Right ventricle myocardium inferior (tissue), 1 donor: ENCODE measurements at regions of chr1 and their contacts with region 1.

Region 1: GRCh38 chr1:159854693-159855192 is 7.7 kb downstream of the VSIG8 start:
- DNase-seq: peak; percentile 94
- ATAC-seq: peak; percentile 98

Region 2: GRCh38 chr1:159780583-159781582 is 73.9 kb before region 1 on chr1 and contains the start of gene DUSP23:
- intact Hi-C with region 1: loop called (anchors 2 kb)
- DNase-seq: peak; percentile 99
- ATAC-seq: peak; percentile 99
- total RNA-seq, gene DUSP23: 21.3 TPM

Region 3: DNA sequence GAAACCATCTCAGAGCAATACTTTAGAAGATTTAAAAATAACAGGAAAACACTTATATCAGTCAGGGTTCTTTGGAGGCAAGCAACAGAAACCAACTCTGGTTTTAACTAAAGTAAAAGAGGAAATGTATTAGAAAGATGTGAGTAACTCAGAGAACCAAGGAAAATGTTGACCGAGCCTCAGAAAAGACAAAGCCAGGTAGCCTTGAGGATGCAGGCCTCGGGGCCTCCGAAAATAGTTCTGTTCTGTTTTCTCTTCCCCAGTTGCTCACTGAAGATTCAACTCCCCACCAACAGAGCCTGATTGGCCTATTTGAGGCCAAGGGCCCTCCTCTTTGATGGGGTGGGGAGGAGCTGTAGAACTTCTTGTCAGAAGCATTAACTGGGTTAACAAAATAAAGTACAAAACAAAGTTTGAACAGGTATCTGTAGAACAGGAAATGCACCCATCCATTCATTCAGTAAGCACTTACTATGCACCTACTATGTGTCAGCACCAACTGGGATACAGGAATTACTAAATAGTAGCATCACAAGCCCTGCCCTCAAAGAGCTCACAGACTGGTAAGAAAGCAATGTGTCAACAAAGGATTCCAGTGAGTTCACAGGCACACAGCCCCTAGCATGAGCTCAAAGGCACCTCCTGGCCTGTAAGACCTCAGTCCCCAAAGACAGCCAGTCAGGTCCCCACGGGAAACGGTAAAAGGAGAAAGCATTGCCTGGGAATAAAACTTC is 15.5 kb before region 1 on chr1:
- intact Hi-C with region 1: no loop called
- DNase-seq: no peak
- ATAC-seq: no peak

Region 4: GRCh38 chr1:159924981-159925712 is 70.4 kb after region 1 on chr1 and contains the start of gene TAGLN2:
- intact Hi-C with region 1: loop called (anchors 2 kb)
- DNase-seq: peak; percentile 97
- ATAC-seq: peak; percentile 84
- total RNA-seq, gene TAGLN2: 143 TPM

Region 5: GRCh38 chr1:160144921-160145320 is 290.2 kb after region 1 on chr1:
- intact Hi-C with region 1: no loop called
- DNase-seq: no peak
- ATAC-seq: no peak